Activated T-helper 1 cell treated with anti-CD3 and anti-CD28 coated beads, Interleukin-12 subunit alpha, Interleukin-12 subunit beta, Interleukin-2, Interleukin-4 antibody, amounts not matched to agents 30 ng/mL and 10 ng/mL and 1 ng/mL, durations not matched to agents 14 hours and 24 hours and 36 hours (primary cell): ENCODE measurements at regions of chr9 and their contacts with region 1.

Region 1: DNA sequence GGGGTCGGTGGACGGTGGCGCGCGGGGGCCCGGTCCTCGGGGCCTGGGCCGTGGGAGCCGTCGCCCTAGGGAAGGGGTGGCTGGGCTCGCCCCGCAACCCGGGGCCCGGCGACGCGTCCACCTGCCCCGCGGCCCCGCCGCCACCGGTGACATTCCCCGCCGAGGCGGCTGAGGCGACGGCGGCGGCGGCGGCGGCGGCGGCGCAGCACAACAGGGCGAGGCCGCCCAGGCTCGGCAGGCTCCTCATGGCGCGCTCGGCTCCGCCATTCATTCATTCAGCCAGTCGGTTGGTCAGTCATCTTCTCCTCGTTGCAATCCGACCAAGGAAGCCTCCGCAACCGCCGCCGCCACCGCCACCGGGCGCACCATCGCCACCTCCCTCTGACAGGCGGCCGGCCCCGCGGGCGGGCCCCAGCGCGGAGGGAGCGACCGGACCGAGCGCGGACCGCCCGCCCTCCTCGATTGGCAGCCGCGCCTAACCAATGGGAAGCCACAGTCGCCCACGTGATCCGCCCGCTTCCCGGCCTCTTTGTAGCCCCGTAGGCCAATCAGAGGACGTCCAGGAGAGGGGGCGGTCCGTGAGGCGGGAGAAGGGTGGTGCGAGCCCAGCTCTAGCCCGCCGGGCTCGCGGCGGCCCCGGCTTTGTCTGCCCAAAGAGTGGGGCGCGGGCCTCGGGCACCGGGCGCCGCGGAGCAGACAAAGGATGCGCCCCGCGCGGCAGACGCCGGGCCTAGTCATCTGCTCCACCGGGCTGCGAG is at the start of gene MEGF9:
- DNase-seq: peak; percentile 96
- H3K4me3 Mint-ChIP-seq: peak within 1 kb of the TSS; percentile 92
- H3K27ac Mint-ChIP-seq: peak within 1 kb of the TSS; percentile 82
- H3K4me1 Mint-ChIP-seq: peaks cover 41% of the 10 kb centered on the region
- H3K27me3 Mint-ChIP-seq: no peaks in the 10 kb centered on the region
- total RNA-seq, gene MEGF9: 5.4 and 5.9 TPM in 2 replicates

Region 2: DNA sequence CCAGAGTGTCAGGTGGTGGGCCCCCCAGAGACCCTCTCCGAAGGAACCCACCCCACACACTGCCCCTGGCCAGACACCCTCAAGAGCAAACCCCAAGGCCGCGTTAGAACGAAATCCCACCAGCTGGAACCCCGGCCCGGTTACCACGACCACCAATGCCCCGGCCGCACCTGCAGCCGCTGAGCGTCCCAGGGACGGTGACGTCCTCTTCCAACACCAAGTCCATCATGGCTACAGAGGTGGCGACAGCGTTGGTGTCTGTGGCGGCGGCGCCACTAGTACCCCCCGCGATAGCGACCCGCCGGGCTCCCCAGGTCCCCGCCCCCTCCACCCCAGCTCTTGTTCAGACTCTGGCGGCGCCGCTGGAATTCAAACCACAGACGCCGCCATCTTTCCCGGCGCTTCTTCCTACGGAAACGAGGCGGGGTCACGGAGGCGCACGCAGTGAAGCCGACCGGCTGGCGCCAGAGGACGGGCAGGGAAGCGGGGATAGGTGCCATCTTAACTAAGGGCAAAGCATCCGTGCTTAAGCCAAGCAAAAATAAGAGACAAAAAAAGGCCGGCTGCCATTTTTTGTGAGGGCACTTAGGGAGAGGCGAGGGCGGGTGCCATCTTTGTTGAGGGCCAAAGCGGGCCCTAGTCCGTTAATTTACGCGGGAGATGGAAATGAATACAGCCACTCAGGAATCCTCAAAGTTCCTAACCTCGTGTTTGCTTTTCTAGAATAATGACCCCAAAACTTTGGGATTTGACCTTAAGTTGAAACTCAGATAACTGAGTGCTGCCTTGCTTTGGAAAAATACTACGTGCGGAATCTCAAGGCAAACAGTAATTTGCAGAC is 134.3 kb before region 1 on chr9 and contains the start of gene CDK5RAP2:
- intact Hi-C with region 1: loop called (anchors 1 kb)
- DNase-seq: peak; percentile 91
- H3K4me3 Mint-ChIP-seq: peak within 1 kb of the TSS; percentile 97
- H3K27ac Mint-ChIP-seq: peak within 1 kb of the TSS; percentile 95
- H3K4me1 Mint-ChIP-seq: peaks cover 54% of the 10 kb centered on the region
- H3K27me3 Mint-ChIP-seq: no peaks in the 10 kb centered on the region
- total RNA-seq, gene CDK5RAP2: 60.3 and 66.7 TPM in 2 replicates

Region 3: DNA sequence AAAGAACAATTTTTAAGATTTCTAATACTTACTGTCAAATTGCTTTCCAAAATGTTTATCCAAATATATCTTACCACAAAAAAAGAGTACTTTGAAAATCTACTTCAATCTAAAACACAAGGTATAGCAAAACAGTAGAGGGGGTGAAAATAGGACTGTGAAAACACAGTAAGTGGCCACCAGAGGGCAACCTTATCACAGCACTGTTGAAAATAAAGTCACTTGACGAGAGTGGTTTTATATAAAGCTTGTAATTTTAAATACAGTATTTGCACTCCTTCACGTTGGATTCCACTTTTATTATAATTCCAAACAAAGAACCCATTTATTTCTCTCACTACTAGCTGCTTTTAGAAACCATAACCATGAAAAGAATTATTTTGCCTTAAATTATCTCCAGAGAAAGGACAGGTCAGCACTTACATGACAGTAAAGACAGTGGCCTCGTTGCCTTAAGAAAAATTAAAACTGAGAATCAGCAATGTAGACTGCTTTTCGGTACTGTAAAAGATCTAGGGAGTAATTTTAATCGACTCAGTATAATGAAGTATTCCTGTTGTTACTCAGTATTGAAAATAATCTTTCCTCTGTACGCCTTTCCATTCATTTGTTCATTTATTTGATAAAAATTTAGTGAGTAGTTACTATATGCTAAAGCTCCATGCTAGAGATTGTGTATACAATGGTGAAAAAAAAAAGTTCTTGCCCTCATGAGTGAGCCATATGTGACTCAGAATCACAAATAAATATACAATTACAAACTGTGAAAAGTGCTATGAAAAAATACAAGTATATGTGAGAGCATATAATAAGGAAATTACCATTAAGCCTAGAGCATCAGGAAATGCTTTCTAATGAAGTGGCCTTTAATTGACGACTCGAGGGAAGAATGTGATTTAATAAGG is 94.3 kb before region 1 on chr9:
- intact Hi-C with region 1: loop called (anchors 1 kb)
- DNase-seq: peak; percentile 29
- H3K4me3 Mint-ChIP-seq: no peak overlapping the region
- H3K27ac Mint-ChIP-seq: no peak overlapping the region
- H3K4me1 Mint-ChIP-seq: peaks cover under 1% of the 10 kb centered on the region
- H3K27me3 Mint-ChIP-seq: no peaks in the 10 kb centered on the region

Region 4: GRCh38 chr9:120692901-120693699 is 21.2 kb before region 1 on chr9:
- intact Hi-C with region 1: loop called (anchors 2 kb)
- DNase-seq: no peak
- H3K4me3 Mint-ChIP-seq: no peak overlapping the region
- H3K27ac Mint-ChIP-seq: no peak overlapping the region
- H3K4me1 Mint-ChIP-seq: peaks cover 38% of the 10 kb centered on the region
- H3K27me3 Mint-ChIP-seq: no peaks in the 10 kb centered on the region

Region 5: GRCh38 chr9:120886490-120886967 is 172.3 kb after region 1 on chr9:
- intact Hi-C with region 1: no loop called
- DNase-seq: no peak
- H3K4me3 Mint-ChIP-seq: no peak overlapping the region
- H3K27ac Mint-ChIP-seq: no peak overlapping the region
- H3K4me1 Mint-ChIP-seq: peaks cover 54% of the 10 kb centered on the region
- H3K27me3 Mint-ChIP-seq: no peaks in the 10 kb centered on the region

Region 6: GRCh38 chr9:120960001-120960400 is 245.7 kb after region 1 on chr9:
- intact Hi-C with region 1: no loop called
- DNase-seq: no peak
- H3K4me3 Mint-ChIP-seq: no peak overlapping the region
- H3K27ac Mint-ChIP-seq: no peak overlapping the region
- H3K4me1 Mint-ChIP-seq: no peaks in the 10 kb centered on the region
- H3K27me3 Mint-ChIP-seq: peaks cover 14% of the 10 kb centered on the region

Region 7: DNA sequence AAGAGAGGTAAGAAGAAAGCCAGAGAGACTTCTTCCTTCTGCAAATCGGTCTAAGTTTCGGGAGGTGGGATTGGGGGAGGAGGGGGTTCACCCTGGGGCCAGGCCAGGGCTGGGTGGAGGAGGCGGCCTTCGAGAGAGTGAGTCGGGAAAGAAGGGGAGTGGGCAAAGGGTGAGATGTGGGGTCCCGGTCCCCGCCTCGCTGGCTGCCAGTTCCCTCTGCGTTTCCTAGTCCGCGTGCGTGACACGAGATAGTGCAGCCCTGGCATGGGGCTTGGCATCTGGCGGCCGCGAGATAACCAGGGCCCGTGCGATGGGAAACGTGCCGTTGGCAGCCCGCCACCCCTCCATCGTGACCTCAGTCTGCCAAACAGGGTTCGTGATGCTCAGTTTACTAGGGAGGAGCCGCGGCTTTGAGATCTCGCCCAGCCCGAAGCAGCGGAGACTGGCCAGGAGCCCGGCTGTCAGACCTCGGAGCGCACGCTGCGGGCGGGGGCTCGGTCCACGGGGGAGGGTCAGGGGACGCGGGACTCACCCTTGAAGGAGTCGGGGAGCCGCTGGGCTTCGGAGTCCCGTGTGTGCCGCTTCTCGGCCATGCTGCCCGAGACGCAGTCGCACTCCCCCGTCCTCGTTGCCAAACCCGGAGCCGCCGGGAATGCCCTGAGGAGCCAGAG is 655.5 kb after region 1 on chr9 and contains the start of gene STOM:
- intact Hi-C with region 1: loop called (anchors 5 kb)
- DNase-seq: no peak
- H3K4me3 Mint-ChIP-seq: peak within 1 kb of the TSS; percentile 87
- H3K27ac Mint-ChIP-seq: peak within 1 kb of the TSS; percentile 96
- H3K4me1 Mint-ChIP-seq: peaks cover 77% of the 10 kb centered on the region
- H3K27me3 Mint-ChIP-seq: no peaks in the 10 kb centered on the region
- total RNA-seq, gene STOM: 51.1 and 51.7 TPM in 2 replicates